HepG2 (cell line): ENCODE measurements at regions of chr17 and their contacts with region 1.

Region 1: GRCh38 chr17:31475378-31476162 is 84.1 kb downstream of the RAB11FIP4 start:
- DNase-seq: peak; percentile 96
- ATAC-seq: peak; percentile 74
- H3K4me3 ChIP-seq: peak overlapping the region; percentile 12 to 59 (median 26); a peak in 5 of 6 replicates
- H3K27ac ChIP-seq: peak overlapping the region; percentile 96
- H3K4me1 ChIP-seq: peaks cover 96% of the 10 kb centered on the region
- H3K27me3 ChIP-seq: no peaks in the 10 kb centered on the region; a peak in 1 of 5 replicates
- CTCF ChIP-seq: no peak
- EP300 ChIP-seq: peak; percentile 85 to 96; a peak in 3 of 4 replicates
- POLR2A ChIP-seq: no peak
- RAD21 ChIP-seq: no peak

Region 2: GRCh38 chr17:31439716-31440115 is 35.9 kb before region 1 on chr17:
- CTCF ChIA-PET with region 1: no interaction called
- POLR2A ChIA-PET with region 1: interaction called, 10 read pairs
- in situ Hi-C with region 1: no loop called
- intact Hi-C with region 1: loop called (anchors 5 kb)
- DNase-seq: no peak
- ATAC-seq: no peak
- H3K4me3 ChIP-seq: no peak overlapping the region
- H3K27ac ChIP-seq: no peak overlapping the region
- H3K4me1 ChIP-seq: peaks cover 60% of the 10 kb centered on the region
- H3K27me3 ChIP-seq: 0 out of 5 replicates have a peak, but pooled peaks cover 0 to under 1% of the 10 kb centered on the region in 2 experiments
- CTCF ChIP-seq: no peak
- EP300 ChIP-seq: no peak
- POLR2A ChIP-seq: no peak
- RAD21 ChIP-seq: no peak

Region 3: DNA sequence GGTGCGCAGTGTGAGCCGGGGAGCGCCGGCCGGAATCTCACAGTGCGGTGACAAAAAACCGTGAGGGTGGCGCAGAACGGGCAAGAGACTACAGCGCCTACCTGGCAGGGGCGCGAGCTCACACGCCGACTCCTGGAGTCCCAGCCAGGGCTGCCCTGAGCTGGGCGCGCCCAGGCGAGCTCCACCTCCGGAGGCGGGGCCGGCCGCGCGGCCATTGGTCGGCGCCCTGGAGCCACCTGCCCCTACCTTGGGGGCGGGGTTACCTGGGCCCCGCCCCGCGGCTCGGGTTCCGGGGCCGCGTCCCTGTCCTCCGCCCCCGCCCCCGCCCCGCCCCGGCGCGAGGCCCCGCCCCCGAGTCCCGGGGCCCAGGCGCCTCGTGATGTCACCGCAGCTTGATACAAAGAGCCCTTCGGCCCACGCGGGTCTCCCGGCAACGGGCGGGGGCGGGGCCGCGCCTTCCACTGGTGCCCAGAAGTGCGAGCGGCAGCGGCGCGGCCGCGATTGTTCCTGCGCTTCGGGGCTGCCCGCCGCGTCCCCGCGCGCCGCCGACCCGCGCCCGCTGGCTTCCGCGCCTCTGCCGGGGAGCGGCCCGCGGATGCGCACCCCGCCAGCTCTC is 12.2 kb after region 1 on chr17:
- CTCF ChIA-PET with region 1: no interaction called
- POLR2A ChIA-PET with region 1: interaction called, 161 read pairs
- in situ Hi-C with region 1: no loop called
- intact Hi-C with region 1: no loop called
- DNase-seq: peak; percentile 86
- ATAC-seq: peak; percentile 90
- H3K4me3 ChIP-seq: peak overlapping the region; percentile 81 to 95 (median 87)
- H3K27ac ChIP-seq: peak overlapping the region; percentile 73
- H3K4me1 ChIP-seq: peaks cover 53% of the 10 kb centered on the region
- H3K27me3 ChIP-seq: no peaks in the 10 kb centered on the region
- CTCF ChIP-seq: peak; percentile 50
- EP300 ChIP-seq: 0 out of 4 replicates have a peak, but pooled peaks of 1 of the 2 experiments have one; percentile 3
- POLR2A ChIP-seq: peak; percentile 91 to 98
- RAD21 ChIP-seq: peak; percentile 68

Region 4: DNA sequence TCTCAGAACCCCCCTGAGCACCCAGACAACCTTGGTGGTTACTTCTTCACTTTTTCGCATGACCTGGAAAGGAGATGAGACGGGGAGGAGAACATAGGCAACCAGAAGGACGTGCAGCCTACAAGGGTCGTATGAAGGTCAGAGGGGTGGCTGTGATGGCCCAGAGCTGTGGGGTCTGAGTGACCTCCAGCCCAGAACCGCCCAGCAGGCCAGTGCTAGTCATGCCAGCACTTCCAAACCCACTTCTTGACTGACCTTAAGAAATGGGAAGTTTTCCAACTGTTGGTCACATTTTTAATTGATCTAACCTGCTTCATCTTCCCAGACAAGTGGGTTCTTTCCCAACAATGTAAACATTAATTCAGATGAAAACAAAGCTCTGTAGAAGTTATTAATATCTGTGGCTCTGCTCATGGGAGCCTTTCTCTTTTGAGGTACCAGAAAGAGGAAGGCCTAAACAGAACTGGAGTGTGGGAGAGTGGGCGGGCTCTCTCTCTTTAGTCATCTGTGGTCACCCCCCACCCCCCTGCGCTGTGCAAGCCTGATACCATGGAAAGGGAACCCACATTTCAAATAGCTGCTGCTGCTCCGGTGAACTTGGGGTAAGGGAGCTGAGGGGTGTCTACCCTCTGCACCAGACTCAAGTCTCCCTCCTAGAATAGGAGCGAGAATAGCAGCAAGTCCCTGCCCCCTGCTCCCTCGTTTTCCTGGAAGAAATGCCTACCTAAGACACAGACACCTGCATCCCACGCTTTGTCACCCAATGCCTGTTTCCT is 17.5 kb after region 1 on chr17:
- CTCF ChIA-PET with region 1: no interaction called
- POLR2A ChIA-PET with region 1: interaction called, 161 read pairs
- in situ Hi-C with region 1: no loop called
- intact Hi-C with region 1: no loop called
- DNase-seq: no peak
- ATAC-seq: no peak
- H3K4me3 ChIP-seq: no peak overlapping the region
- H3K27ac ChIP-seq: peak overlapping the region; percentile 8
- H3K4me1 ChIP-seq: peaks cover 83% of the 10 kb centered on the region
- H3K27me3 ChIP-seq: no peaks in the 10 kb centered on the region
- CTCF ChIP-seq: no peak
- EP300 ChIP-seq: no peak
- POLR2A ChIP-seq: no peak
- RAD21 ChIP-seq: no peak

Region 5: DNA sequence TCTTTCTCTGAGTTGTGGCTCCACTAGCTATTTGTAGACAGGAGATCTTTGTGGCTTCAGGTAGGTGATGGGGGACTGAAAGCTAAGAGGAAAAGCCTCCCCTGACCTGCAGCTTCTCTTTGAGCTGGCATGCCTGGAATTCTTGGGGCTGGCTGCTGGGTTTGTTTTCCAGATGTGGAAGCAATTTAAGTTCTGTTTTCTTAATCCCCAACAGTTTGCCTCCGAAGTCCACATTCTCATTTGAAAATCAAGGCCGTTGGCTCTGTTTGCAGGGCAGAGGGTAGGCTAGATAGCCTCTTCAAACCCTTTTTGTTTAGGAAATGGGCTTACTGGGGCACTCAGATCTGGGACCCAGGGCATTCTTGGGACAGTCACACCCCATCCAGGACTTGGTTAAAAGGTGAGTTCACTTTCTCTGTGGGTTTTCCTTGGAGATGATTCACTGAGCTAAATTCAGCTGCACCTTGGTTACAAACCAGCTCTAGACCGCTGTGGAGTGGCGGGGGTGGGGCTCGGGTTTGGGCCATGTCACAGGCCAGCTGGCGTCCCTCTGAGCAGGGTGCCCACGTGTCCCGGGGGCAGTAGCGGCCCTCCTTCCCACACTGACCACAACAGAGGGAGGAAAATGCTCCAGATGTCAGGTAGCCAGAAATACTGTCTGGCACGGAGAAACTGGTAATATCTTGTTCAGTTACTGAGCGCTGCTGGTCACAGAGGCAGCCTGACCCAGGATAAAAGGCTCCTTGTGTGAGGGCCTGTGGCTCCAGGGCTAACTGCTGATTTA is 24.4 kb after region 1 on chr17:
- CTCF ChIA-PET with region 1: no interaction called
- POLR2A ChIA-PET with region 1: interaction called, 25 read pairs
- in situ Hi-C with region 1: no loop called
- intact Hi-C with region 1: no loop called
- DNase-seq: peak; percentile 91
- ATAC-seq: peak; percentile 64
- H3K4me3 ChIP-seq: peak overlapping the region; percentile 32 to 53 (median 41); a peak in 5 of 6 replicates
- H3K27ac ChIP-seq: peak overlapping the region; percentile 87
- H3K4me1 ChIP-seq: peaks cover 84% of the 10 kb centered on the region
- H3K27me3 ChIP-seq: no peaks in the 10 kb centered on the region
- CTCF ChIP-seq: no peak
- EP300 ChIP-seq: peak; percentile 55 to 84; a peak in 3 of 4 replicates
- POLR2A ChIP-seq: peak in 1 of 2 experiments; percentile 29; a peak in 2 of 4 replicates
- RAD21 ChIP-seq: no peak